ENCODE measurements at regions of chr10 and their contacts with region 1.

Region 1: DNA sequence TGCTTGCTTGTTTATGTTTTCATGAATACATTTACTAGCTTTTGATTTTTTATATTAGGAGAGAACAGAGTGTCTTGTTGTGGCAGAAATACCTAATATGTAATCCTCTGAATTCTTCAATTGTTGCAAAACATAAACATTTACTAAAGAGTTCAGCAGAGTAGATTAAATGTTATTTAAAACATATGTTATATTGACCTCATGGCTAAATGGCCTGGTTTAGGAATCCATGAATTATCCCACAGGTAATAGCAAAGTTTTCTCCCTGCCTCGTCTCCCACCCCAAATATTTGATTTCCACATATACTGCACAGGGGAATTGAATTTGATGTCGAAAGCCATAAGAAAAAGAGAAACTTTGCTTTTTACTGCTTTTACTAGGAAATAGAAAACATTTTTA is 111.8 kb downstream of the ADK start:
- DNase-seq: no peak
- H3K4me3 ChIP-seq: no peak overlapping the region
- H3K27ac ChIP-seq: no peak overlapping the region
- H3K4me1 ChIP-seq: no peaks in the 10 kb centered on the region
- H3K27me3 ChIP-seq: no peaks in the 10 kb centered on the region
- CTCF ChIP-seq: no peak
- POLR2A ChIP-seq: no peak

Region 2: DNA sequence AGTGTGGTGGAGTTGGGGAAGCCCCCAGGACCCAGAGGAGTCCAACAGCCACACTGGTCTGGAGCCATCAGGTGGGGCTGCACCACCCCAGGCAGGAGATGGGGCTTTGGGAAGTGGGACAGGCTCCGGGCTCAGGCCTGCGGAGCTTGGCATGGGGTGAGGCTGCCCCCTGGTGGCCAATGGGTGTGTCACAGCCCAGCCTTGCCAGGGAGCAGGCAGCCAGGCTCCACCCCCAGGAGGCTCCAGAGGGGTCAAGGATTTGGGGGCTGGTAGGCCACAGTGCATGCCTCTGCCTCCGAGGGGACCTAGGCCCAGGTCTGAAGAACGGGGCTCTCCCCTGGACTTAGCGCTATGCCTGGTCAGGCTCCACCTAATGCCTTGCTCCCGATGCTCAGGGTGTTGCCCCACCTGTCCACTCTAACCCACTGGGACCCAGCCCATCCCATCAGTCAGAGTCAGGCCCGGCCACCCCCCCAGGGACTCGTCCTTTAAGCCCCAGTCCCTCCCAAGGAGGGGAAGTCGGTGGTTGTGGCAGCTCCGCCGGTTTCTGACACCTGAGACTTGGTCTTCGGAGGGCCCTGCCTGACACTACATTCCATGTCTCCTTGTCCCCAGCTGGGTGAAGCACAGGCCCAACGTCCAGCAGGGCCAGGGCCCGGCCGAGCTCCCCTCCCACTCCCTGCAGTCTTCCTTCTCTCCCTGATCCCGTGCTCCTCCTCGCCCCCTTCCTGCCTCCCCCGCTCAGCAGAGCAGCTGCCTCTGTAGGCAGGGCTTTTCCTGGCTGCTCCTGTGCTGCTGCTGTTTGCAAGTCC is 837.3 kb after region 1 on chr10:
- intact Hi-C with region 1: loop called (anchors 5 kb)
- DNase-seq: peak; percentile 88
- H3K4me3 ChIP-seq: no peak overlapping the region
- H3K27ac ChIP-seq: peak overlapping the region; percentile 36 to 70
- H3K4me1 ChIP-seq: peaks cover 11% of the 10 kb centered on the region
- H3K27me3 ChIP-seq: no peaks in the 10 kb centered on the region
- CTCF ChIP-seq: peak; percentile 97 to 98 (median 98)
- POLR2A ChIP-seq: no peak